Posterior vena cava (tissue), 2 donors: ENCODE measurements at regions of chr3 and their contacts with region 1.

Region 1: DNA sequence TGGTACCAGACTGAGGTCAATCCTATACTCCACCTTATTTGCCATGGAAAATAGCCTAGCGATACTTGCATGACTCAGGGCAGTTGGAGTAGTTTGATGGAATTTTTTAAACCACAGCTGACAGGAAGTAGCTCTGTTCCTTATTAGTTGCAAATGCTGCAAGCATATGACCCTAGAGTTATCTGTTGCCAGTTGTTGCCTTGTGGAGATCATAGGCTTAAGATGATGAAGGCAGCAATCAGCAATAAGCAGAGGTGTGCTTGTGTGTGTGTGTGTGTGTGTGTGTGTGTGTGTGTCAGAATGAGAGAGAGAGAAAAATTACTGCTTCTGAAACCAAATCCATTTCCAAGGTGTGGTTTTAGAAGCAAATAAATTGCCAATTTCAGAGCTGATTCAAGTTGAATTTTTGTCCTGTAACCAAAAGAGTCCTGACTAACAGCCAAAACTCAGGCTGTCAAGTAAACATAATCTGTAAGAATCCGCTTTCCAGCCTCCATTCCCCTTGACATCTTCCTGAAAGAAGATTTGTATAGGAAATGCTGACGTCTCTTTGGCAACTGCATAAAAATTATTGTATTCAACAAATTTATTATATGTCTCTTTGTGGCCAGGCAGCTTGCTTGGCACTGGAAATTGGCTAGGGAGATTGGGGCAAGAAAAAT is 141.2 kb downstream of the SERPINI1 start:
- DNase-seq: no peak

Region 2: DNA sequence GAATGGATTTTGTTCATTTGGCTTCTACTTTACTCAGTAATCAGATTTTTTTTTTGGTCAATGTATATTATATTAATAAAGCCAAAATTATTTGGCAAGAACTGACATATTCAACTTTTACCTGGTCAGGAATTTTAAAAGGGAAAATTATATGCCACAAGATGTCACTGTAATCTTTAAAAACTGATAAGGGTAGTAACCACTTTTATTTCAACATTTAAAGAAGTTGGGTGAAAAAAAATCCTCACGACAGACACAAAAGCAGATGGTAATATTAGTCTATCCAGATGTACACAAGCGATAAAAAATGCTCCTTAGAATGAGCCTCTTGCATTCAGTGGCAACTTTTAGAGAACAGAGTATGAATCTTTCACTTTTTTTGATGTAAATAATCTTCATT is 39.3 kb before region 1 on chr3:
- intact Hi-C with region 1: loop called in 1 of 2 experiments (anchors 5 kb)
- DNase-seq: no peak

Region 3: GRCh38 chr3:167913219-167913835 is 36.6 kb after region 1 on chr3:
- intact Hi-C with region 1: no loop called
- DNase-seq: no peak

Region 4: GRCh38 chr3:168364967-168365366 is 488.2 kb after region 1 on chr3:
- intact Hi-C with region 1: no loop called
- DNase-seq: no peak